CD14-positive monocyte (primary cell): ENCODE measurements at regions of chr6 and their contacts with region 1.

Region 1: DNA sequence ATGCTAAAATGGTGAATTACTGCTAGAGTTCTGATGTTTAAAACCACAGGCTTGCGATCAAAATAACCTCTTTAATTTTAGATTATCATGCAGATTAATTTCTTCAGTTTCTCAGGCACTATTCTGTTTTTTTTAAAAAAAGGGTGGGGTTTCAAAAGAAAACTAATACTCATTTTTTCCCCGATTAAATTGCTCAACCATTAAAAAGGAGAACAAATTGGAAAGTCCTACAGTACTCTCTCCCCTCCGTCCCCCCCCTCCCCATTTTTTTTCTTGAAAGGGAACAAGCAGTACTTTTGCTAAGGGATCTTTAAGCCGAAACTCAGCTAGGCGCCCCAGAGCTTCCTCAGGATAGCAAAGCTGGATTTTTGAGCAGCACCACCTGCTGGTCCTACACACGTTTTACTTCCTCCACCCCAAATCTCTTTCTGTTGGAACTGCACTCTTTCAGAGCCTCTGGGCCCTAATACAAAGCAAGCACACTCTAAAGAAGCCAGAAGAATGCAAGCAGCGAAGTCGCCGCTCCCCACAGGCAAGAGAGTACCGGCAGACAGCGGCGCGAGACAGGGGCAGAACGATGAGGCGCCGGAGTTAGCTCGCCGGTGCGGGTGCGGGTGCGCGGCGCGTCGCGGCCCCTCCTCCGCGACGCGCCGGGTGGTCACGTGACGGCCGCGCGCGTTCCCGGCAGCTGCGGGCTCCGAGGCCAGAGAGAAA is at the start of gene RNF146:
- DNase-seq: peak; percentile 82 to 90 (median 87)
- H3K4me3 ChIP-seq: peak within 1 kb of the TSS; percentile 69 to 94 (median 86)
- H3K4me3 Mint-ChIP-seq: peak within 1 kb of the TSS; percentile 90 to 100
- H3K27ac ChIP-seq: peak within 1 kb of the TSS; percentile 97 to 100
- H3K27ac Mint-ChIP-seq: peak within 1 kb of the TSS; percentile 97 to 100 (median 99)
- H3K4me1 ChIP-seq: peaks cover 24 to 50% of the 10 kb centered on the region in 2 donors
- H3K4me1 Mint-ChIP-seq: peaks cover 47% of the 10 kb centered on the region
- H3K27me3 ChIP-seq: no peaks in the 10 kb centered on the region
- H3K27me3 Mint-ChIP-seq: no peaks in the 10 kb centered on the region
- CTCF ChIP-seq: peak; percentile 73
- polyA plus RNA-seq, gene RNF146: 14.7 to 63.4 (median 22.5) TPM

Region 2: DNA sequence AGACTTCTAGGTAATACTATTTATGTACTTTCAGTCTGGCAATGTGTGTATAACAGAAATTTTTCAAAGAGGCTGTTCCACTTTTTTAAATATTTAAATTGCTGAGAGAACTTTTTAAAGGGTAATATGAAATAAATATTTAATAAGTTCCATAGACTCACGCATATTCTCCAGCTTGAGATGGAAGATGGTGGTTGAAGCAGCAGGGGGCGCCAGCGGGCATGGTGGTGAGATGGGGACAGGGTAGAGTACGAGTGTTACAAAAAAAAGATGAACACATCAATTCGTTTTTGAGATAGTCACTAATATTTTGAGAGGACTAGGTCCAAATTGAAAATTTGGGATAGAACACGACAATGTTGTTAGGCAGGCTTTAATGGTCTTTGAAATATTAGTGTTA is 79.4 kb before region 1 on chr6:
- intact Hi-C with region 1: loop called in 1 of 2 experiments (anchors 2 kb)
- DNase-seq: peak; percentile 60 to 63 (median 60)
- H3K4me3 ChIP-seq: no peak overlapping the region
- H3K4me3 Mint-ChIP-seq: no peak overlapping the region
- H3K27ac ChIP-seq: no peak overlapping the region
- H3K27ac Mint-ChIP-seq: no peak overlapping the region
- H3K4me1 ChIP-seq: peaks cover 3 to 4% of the 10 kb centered on the region in 2 donors
- H3K4me1 Mint-ChIP-seq: peaks cover 11% of the 10 kb centered on the region
- H3K27me3 ChIP-seq: peaks cover 0 to 2% of the 10 kb centered on the region in 2 donors
- H3K27me3 Mint-ChIP-seq: no peaks in the 10 kb centered on the region
- CTCF ChIP-seq: peak; percentile 80

Region 3: GRCh38 chr6:127201321-127201720 is 65.0 kb before region 1 on chr6:
- intact Hi-C with region 1: loop called in 1 of 2 experiments (anchors 10 kb)
- DNase-seq: no peak
- H3K4me3 ChIP-seq: no peak overlapping the region
- H3K4me3 Mint-ChIP-seq: no peak overlapping the region
- H3K27ac ChIP-seq: no peak overlapping the region
- H3K27ac Mint-ChIP-seq: no peak overlapping the region
- H3K4me1 ChIP-seq: peaks cover 50 to 53% of the 10 kb centered on the region in 2 donors
- H3K4me1 Mint-ChIP-seq: peaks cover 45% of the 10 kb centered on the region
- H3K27me3 ChIP-seq: no peaks in the 10 kb centered on the region
- H3K27me3 Mint-ChIP-seq: no peaks in the 10 kb centered on the region
- CTCF ChIP-seq: no peak

Region 4: GRCh38 chr6:127328043-127328609 is 61.8 kb after region 1 on chr6:
- intact Hi-C with region 1: no loop called
- DNase-seq: no peak
- H3K4me3 ChIP-seq: no peak overlapping the region
- H3K4me3 Mint-ChIP-seq: no peak overlapping the region
- H3K27ac ChIP-seq: no peak overlapping the region
- H3K27ac Mint-ChIP-seq: no peak overlapping the region
- H3K4me1 ChIP-seq: peaks cover 19 to 22% of the 10 kb centered on the region in 2 donors
- H3K4me1 Mint-ChIP-seq: peaks cover 33% of the 10 kb centered on the region
- H3K27me3 ChIP-seq: no peaks in the 10 kb centered on the region
- H3K27me3 Mint-ChIP-seq: no peaks in the 10 kb centered on the region
- CTCF ChIP-seq: no peak

Region 5: GRCh38 chr6:127342946-127343808 is 76.8 kb after region 1 on chr6 and contains the start of gene ECHDC1:
- intact Hi-C with region 1: loop called in 1 of 2 experiments (anchors 10 kb)
- DNase-seq: peak; percentile 54 to 62 (median 57)
- H3K4me3 ChIP-seq: peak within 1 kb of the TSS; percentile 75 to 93 (median 83)
- H3K4me3 Mint-ChIP-seq: no peak within 1 kb of the TSS
- H3K27ac ChIP-seq: peak within 1 kb of the TSS; percentile 92 to 98
- H3K27ac Mint-ChIP-seq: no peak within 1 kb of the TSS
- H3K4me1 ChIP-seq: peaks cover 74 to 85% of the 10 kb centered on the region in 2 donors
- H3K4me1 Mint-ChIP-seq: peaks cover 37% of the 10 kb centered on the region
- H3K27me3 ChIP-seq: no peaks in the 10 kb centered on the region
- H3K27me3 Mint-ChIP-seq: no peaks in the 10 kb centered on the region
- CTCF ChIP-seq: no peak
- polyA plus RNA-seq, gene ECHDC1: 36.4 to 104 (median 102) TPM